Calu3 (cell line): ENCODE measurements at regions of chr18 and their contacts with region 1.

Region 1: GRCh38 chr18:30971338-30971956 is 71.1 kb downstream of the DSC3 start:
- DNase-seq: no peak
- H3K4me3 Mint-ChIP-seq: no peak overlapping the region
- H3K27ac Mint-ChIP-seq: no peak overlapping the region
- H3K4me1 Mint-ChIP-seq: no peaks in the 10 kb centered on the region
- H3K27me3 Mint-ChIP-seq: no peaks in the 10 kb centered on the region
- CTCF ChIP-seq: peak; percentile 29

Region 2: DNA sequence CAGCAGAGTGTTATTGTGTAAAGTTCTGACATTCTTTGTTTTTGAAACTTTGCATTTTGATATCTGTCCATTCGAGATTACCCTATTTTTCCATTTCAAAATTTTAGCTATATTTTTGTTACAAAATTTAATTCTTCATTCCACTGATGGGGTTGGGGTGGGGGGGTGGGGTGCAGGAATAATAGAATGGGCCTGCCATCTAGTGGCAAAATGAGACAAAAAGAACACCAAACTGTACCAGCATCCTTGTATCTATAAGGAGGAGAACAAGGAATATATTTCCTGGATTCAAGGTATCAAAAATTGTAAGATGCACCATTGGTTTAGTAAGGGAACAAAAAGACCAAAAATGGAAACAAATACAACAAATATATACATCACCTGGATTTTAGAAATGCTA is 592.3 kb after region 1 on chr18:
- CTCF ChIA-PET with region 1: no interaction called
- intact Hi-C with region 1: loop called (anchors 2 kb)
- DNase-seq: no peak
- H3K4me3 Mint-ChIP-seq: no peak overlapping the region
- H3K27ac Mint-ChIP-seq: no peak overlapping the region
- H3K4me1 Mint-ChIP-seq: no peaks in the 10 kb centered on the region
- H3K27me3 Mint-ChIP-seq: peaks cover 13% of the 10 kb centered on the region
- CTCF ChIP-seq: peak; percentile 26